ENCODE measurements at regions of chr5 and their contacts with region 1.

Region 1: DNA sequence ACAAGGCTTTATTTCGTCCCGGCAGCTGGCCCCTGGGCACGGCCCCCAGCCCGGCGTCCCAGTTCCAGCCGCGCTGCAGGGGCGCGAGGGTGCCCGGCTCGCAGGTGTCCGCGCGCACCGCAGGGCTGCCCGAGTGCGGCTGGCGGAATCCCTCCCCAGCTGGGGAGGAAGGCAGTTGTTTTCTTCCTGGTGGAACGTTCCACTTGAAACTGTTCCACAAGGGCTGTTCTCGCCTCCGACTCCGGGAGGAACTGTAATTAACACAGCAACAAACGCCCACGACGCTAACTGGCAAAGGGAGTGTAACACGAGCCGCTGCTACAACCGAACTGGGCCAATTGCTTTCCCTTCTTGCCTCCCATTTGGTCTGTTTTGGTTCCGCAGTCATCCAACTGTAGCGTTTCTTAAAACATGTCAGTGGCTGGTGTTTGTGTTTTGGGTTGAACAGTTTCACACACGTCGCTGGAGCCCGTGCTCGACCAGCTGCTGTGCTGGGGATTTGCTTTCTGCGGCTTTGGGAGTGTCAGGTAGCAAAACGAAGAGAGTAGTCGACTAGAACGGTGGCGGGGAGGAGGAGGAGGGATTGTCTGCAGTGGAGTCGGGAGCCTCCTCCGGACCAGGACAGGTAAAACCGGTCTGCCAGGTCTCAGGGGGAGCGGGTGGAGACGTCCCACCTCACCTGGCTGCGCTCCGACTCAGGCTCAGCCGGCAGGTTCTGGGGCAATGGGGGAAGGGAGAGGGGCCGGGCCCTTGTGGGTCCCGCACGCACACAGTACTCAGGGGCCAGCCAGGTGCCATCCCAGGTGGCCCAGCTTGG is 131.6 kb upstream of the NIPBL start:
- DNase-seq: peak; percentile 92
- H3K4me3 Mint-ChIP-seq: peak overlapping the region; percentile 94
- H3K27ac Mint-ChIP-seq: peak overlapping the region; percentile 86
- H3K4me1 Mint-ChIP-seq: peaks cover 35% of the 10 kb centered on the region
- H3K27me3 Mint-ChIP-seq: peaks cover 12% of the 10 kb centered on the region
- CTCF ChIP-seq: no peak

Region 2: DNA sequence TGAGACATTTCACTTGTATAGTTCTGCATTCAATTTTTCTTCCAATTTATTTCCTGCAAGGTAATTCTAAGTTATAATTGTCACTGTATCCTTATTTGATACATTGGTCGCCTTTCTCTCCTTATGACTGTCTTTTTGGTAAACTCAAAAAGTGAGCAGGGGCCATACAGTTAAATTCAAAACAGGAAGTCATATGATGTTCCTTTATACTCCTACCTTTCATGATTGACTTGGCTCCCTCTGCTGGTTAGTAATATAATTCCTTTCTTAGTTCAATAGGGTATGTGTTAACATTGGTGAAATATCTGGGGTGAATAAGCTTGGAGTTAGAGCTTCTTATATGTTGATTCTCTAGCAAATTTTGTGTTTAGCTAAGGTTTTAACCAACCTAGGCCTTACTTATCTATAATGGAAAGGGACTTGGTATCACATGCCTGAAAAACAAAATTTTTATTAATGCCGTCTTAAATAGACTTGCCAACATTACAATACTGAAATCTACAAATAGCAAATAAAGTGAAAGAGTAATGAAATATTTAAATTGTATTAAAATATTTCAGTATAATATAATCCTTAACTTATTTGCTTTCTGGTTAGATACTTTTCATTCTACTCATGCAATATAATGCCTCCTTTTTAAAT is 125.5 kb after region 1 on chr5:
- CTCF ChIA-PET with region 1: interaction called, 14 read pairs
- intact Hi-C with region 1: loop called (anchors 1 kb)
- DNase-seq: no peak
- H3K4me3 Mint-ChIP-seq: no peak overlapping the region
- H3K27ac Mint-ChIP-seq: no peak overlapping the region
- H3K4me1 Mint-ChIP-seq: peaks cover 21% of the 10 kb centered on the region
- H3K27me3 Mint-ChIP-seq: no peaks in the 10 kb centered on the region
- CTCF ChIP-seq: no peak

Measured in Calu3 (cell line).